ENCODE measurements at regions of chr2 and their contacts with region 1.

Region 1: DNA sequence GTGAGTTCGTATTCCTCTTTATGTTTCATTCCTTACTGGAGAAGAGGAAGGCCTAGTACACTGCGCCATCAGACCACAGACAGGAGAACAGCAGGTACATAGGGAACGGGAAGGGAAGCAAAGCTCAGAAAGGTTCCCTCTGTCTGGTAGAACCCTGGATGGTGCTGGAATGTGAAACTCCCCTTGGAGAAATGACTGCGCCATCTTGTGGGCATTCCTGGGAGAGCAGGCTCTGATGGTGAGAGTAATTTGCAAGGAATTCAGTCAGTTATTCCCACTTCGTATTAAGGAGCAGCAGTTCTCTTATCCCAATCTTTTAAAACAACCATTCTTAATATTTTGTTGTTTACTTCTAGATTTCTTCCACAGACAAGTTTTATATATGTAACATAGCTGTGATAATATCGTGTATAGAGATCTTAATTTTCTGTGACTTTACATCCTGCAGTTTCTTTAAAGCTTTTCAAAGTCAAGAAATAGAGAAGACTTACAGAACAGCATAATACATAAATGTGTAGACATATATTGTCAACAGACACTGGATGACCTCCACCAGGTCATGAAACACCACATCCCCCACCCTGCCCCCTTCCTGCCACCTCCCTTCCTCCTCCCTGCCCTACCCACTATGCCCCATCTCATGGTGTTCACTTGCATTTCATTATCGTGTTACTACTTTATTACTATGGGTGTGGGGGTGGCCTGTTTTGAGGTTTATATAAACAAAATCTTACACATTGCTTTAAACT is 83.9 kb downstream of the ARHGEF4 start:
- DNase-seq: peak; percentile 85
- H3K4me3 Mint-ChIP-seq: no peak overlapping the region
- H3K27ac Mint-ChIP-seq: peak overlapping the region; percentile 61
- H3K4me1 Mint-ChIP-seq: peaks cover 6% of the 10 kb centered on the region
- H3K27me3 Mint-ChIP-seq: no peaks in the 10 kb centered on the region
- CTCF ChIP-seq: peak; percentile 90

Region 2: DNA sequence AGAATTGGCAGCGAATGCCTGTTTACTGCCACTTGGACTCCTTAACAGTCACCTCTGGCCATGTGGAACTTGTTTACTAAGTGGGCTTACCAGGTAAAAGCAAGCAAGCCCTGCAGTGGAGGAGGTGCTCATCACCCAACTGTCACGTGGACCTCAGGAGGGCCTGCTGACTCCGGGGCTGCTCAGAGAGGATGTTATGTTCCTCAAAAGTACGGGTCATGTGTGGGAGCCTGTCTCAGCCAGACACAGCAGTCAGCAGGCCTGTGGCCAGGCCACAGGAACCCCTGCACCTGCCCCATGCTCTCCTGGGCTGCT is 129.0 kb before region 1 on chr2:
- CTCF ChIA-PET with region 1: interaction called, 102 read pairs
- POLR2A ChIA-PET with region 1: interaction called, 10 read pairs
- intact Hi-C with region 1: no loop called
- DNase-seq: no peak
- H3K4me3 Mint-ChIP-seq: no peak overlapping the region
- H3K27ac Mint-ChIP-seq: no peak overlapping the region
- H3K4me1 Mint-ChIP-seq: no peaks in the 10 kb centered on the region
- H3K27me3 Mint-ChIP-seq: no peaks in the 10 kb centered on the region
- CTCF ChIP-seq: no peak

Region 3: DNA sequence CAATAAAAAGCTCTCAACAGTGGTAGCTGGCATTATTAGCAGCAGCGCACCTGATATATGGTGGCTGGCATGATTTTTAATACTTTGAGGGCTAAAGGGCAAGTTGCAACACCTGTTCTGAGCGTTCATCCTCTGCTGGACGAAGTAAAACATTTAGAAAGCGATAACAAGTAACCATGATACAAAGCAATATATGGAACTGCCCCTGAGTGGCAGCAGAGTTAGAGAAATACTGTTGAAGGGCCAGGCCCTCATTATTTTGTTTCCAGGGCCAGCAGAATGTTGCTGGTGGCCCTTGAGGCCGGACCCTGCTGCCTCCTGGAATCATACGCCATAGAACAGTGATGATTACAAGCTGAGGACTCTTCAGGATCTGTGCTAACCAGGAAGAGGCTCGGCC is 36.1 kb before region 1 on chr2:
- CTCF ChIA-PET with region 1: interaction called, 16 read pairs
- POLR2A ChIA-PET with region 1: no interaction called
- intact Hi-C with region 1: no loop called
- DNase-seq: no peak
- H3K4me3 Mint-ChIP-seq: no peak overlapping the region
- H3K27ac Mint-ChIP-seq: peak overlapping the region; percentile 49
- H3K4me1 Mint-ChIP-seq: peaks cover 40% of the 10 kb centered on the region
- H3K27me3 Mint-ChIP-seq: no peaks in the 10 kb centered on the region
- CTCF ChIP-seq: no peak

Region 4: DNA sequence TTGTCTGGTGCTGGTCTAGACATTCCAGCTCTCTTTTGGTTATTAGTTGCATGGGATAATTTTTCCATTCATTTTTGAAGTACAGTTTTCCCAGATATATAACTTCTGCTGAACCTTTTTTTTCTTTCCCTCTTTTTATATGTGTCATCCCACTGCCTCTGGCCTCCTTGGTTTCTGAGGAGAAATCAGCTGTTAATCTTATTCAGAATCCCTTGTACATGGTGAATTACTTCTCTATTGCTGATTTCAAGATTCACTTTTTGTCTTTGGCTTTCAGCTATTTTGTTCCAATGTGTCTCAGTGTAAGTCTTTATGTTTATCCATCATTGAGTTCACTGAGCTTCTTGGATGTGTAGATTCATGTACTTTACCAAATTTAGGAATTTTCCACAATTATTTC is 15.9 kb after region 1 on chr2:
- CTCF ChIA-PET with region 1: interaction called, 13 read pairs
- POLR2A ChIA-PET with region 1: interaction called, 3 read pairs
- intact Hi-C with region 1: no loop called
- DNase-seq: peak; percentile 2
- H3K4me3 Mint-ChIP-seq: no peak overlapping the region
- H3K27ac Mint-ChIP-seq: no peak overlapping the region
- H3K4me1 Mint-ChIP-seq: peaks cover 6% of the 10 kb centered on the region
- H3K27me3 Mint-ChIP-seq: no peaks in the 10 kb centered on the region
- CTCF ChIP-seq: no peak

Region 5: DNA sequence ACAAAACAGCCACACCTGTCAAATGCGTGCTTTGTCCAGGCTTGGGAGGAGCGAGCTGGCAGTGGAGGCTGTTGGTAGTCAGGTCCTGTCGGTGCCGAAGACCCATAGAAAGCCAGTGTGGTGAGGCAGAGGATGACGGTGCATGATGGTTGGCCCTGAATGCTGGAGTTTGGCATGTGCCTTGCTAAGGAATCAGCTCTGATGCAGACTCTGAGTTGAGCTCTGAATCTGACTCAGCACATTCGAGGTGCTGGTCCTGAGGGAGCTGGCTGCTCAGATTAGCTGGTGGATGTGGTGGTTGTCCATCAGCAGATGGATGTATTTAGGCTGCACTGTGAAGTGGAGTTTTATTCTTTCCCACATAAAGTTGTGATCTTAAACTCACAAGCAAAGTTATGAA is 27.4 kb after region 1 on chr2:
- CTCF ChIA-PET with region 1: interaction called, 21 read pairs
- POLR2A ChIA-PET with region 1: no interaction called
- intact Hi-C with region 1: no loop called
- DNase-seq: no peak
- H3K4me3 Mint-ChIP-seq: no peak overlapping the region
- H3K27ac Mint-ChIP-seq: no peak overlapping the region
- H3K4me1 Mint-ChIP-seq: no peaks in the 10 kb centered on the region
- H3K27me3 Mint-ChIP-seq: no peaks in the 10 kb centered on the region
- CTCF ChIP-seq: no peak

Region 6: DNA sequence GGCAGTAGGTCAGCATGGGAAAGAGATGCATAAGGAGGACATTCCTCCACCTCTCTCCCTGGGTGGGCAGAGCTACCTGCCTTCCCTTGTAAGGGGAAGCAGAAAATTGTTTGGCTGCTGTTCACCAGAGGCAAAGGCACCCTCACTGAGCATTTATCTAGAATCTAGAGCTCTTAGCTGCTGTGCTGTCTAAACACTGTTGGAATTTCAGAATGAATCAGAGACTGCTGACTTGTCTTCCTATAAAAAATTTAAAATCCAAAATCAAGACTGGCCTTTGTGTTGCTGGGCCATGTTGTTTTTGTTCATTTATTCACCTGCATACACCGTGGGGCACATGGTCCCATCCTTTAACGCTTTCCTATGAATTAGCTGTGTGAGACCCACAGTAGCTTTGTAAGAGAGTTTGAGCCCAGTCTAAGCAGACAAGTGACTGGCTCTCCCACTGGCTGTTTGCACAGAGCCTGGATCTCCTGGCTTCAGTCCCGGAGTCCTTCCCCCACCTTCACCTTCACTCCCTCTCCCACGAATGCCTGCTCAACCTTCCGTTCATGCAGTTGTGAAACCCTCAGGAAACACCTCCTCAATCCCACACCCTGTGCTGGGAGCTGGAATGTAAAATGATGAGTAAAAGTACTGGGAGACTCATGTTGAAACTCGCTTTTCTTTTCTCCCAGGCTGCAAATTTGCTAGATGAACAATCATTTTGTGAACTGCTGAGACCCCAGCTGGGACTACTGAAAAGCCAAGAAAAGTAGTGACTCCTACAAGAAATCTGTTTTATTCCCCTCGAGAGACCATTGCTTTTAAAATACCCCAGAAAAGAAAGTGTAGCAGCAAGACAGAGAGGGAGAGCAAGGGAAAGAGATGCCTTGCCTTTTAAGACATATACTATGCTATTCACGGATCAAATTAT is 96.5 kb after region 1 on chr2:
- CTCF ChIA-PET with region 1: interaction called, 7 read pairs
- POLR2A ChIA-PET with region 1: interaction called, 6 read pairs
- intact Hi-C with region 1: loop called (anchors 10 kb)
- DNase-seq: peak; percentile 99
- H3K4me3 Mint-ChIP-seq: peak overlapping the region; percentile 71
- H3K27ac Mint-ChIP-seq: peak overlapping the region; percentile 97
- H3K4me1 Mint-ChIP-seq: peaks cover 35% of the 10 kb centered on the region
- H3K27me3 Mint-ChIP-seq: no peaks in the 10 kb centered on the region
- CTCF ChIP-seq: no peak

Measured in MCF 10A (cell line).